Sigmoid colon (tissue), 7 donors: ENCODE measurements at regions of chr3 and their contacts with region 1.

Region 1: DNA sequence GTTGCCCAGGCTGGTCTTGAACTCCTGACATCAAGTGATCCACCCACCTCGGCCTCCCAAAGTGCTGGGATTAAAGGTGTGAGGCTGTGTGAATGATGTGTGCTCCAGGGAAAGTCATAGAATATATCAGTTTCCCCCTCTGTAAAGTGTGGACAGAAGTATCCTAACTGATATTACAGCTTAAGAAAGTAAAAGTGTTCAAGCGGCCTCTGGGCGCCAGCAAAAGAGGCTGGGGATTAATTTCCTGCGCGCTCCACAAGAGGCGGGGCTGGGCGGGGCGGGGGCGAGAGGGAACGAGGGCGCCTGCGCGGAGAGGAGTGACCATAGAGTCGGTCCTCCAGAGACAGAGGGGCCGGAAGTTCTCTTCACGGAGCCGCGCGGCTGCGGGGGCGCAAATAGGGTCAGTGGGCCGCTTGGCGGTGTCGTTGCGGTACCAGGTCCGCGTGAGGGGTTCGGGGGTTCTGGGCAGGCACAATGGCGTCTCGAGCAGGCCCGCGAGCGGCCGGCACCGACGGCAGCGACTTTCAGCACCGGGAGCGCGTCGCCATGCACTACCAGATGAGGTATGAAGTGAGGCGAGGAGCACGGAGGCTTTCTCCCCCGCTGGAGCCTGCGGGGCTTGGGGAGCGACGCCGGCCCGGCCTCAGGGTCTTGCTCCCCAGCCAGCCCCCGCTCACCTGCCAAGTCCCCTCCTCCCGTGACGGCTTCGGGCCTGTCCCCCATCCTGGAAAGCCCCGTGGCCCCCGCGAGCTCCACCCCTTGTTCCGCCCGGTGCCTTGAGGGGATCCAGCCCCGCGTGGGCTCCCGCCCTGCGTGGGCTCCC is at the start of gene JAGN1:
- DNase-seq: peak; percentile 95
- H3K4me3 ChIP-seq: peak within 1 kb of the TSS; percentile 65 to 99 (median 98)
- H3K27ac ChIP-seq: peak within 1 kb of the TSS; percentile 90 to 100 (median 98)
- H3K4me1 ChIP-seq: peaks cover 0 to 36% (median 26%) of the 10 kb centered on the region in 4 donors
- H3K27me3 ChIP-seq: no peaks in the 10 kb centered on the region
- CTCF ChIP-seq: peak in 1 of 4 experiments; percentile 15
- EP300 ChIP-seq: no peak
- POLR2A ChIP-seq: peak; percentile 93 to 95
- total RNA-seq, gene JAGN1: 33.7 to 55.1 (median 45.9) TPM

Region 2: DNA sequence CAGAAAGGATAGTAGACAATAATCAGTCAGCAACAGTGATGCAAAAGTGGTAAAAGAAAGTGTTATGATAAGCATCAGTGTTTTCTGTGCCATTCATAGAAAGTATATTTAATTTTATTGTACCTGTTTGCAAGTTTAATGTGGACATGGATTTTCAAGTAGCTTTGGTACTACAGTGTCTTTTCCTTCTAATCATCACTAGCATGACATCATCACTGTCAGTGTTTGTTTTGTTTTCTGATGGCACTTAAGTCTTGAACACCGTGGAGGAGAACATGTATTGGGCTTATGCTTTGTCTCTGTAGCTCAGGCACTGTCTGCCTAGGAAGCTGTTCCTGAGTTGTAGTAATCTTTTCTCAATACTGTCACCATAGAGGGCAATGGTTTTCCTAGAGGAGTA is 451.1 kb before region 1 on chr3:
- intact Hi-C with region 1: no loop called
- DNase-seq: no peak
- H3K4me3 ChIP-seq: no peak overlapping the region
- H3K27ac ChIP-seq: no peak overlapping the region
- H3K4me1 ChIP-seq: peaks cover 0 to 23% (median 5%) of the 10 kb centered on the region in 4 donors
- H3K27me3 ChIP-seq: no peaks in the 10 kb centered on the region
- CTCF ChIP-seq: no peak
- EP300 ChIP-seq: no peak
- POLR2A ChIP-seq: no peak

Region 3: DNA sequence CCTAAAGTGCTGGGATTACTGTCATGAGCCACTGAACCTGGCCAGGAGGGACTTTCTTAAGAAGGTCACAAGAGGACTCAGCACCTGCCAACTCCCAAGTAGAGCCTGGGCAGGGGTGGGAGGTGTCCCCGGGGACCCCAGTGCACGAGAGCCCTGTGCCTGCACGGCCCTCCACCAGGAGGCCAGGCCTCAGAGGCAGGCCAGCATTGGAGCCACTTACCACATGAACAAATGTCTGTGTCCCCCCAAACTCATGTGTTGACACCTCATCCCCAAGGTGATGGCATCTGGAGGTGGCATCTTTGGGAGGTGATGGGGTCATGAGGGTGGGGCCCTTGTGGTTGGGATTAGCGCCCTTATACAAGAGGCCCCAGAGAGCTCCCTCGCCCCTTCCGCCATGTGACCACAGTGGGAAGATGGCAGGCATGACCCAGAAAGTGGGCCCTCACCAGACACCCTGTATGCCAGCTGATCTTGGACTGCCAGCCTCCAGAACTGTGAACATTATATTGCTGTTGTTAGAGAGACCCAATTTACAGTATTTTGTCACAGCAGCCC is 43.5 kb before region 1 on chr3:
- intact Hi-C with region 1: no loop called
- DNase-seq: no peak
- H3K4me3 ChIP-seq: no peak overlapping the region
- H3K27ac ChIP-seq: no peak overlapping the region
- H3K4me1 ChIP-seq: peaks cover 0 to 17% (median 12%) of the 10 kb centered on the region in 4 donors
- H3K27me3 ChIP-seq: no peaks in the 10 kb centered on the region
- CTCF ChIP-seq: no peak
- EP300 ChIP-seq: no peak
- POLR2A ChIP-seq: no peak

Region 4: GRCh38 chr3:9862391-9863057 is 27.9 kb before region 1 on chr3:
- intact Hi-C with region 1: loop called (anchors 2 kb)
- DNase-seq: peak; percentile 89
- H3K4me3 ChIP-seq: peak overlapping the region; percentile 10 to 39 (median 23)
- H3K27ac ChIP-seq: peak overlapping the region; percentile 82 to 93 (median 90)
- H3K4me1 ChIP-seq: peaks cover 0 to 53% (median 50%) of the 10 kb centered on the region in 4 donors
- H3K27me3 ChIP-seq: no peaks in the 10 kb centered on the region
- CTCF ChIP-seq: peak in 2 of 4 experiments; percentile 19 to 55
- EP300 ChIP-seq: peak in 1 of 4 donors; percentile 17
- POLR2A ChIP-seq: no peak